Activated B cell treated with CpG ODN at 0.5 μM for 24 hours (primary cell): ENCODE measurements at regions of chr15 and their contacts with region 1.

Region 1: DNA sequence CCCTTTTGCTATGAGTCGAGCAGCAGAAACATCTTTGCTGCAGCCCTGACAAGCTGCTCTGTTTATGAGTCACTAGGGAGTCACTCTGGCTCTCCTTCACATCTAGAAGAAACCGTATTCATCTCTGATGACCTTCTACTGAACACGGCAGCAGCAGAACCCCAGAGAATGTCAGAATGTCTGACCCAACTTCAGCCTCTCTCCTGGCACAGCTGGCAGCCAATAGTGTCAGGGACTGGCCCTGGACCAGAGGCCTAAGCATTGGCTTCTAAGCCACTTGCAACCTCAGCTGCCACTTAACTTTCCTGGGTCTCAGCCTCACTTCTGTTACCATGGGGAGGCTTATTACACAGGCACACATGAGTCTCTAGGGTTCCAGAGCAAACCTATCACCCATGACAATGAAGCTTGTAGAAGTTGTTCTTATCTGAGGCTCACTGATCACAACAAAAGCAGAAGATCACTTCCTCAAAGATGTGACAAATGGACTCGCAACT is 184.1 kb upstream of the TLE3 start:
- DNase-seq: peak; percentile 53
- ATAC-seq: peak; percentile 88
- H3K4me3 Mint-ChIP-seq: peak overlapping the region; percentile 33
- H3K27ac Mint-ChIP-seq: peak overlapping the region; percentile 94
- H3K4me1 Mint-ChIP-seq: peaks cover 55% of the 10 kb centered on the region
- H3K27me3 Mint-ChIP-seq: no peaks in the 10 kb centered on the region
- CTCF ChIP-seq: no peak

Region 2: GRCh38 chr15:69903470-69904469 is 378.1 kb before region 1 on chr15:
- CTCF ChIA-PET with region 1: no interaction called
- POLR2A ChIA-PET with region 1: no interaction called
- intact Hi-C with region 1: no loop called
- DNase-seq: no peak
- ATAC-seq: no peak
- H3K4me3 Mint-ChIP-seq: no peak overlapping the region
- H3K27ac Mint-ChIP-seq: no peak overlapping the region
- H3K4me1 Mint-ChIP-seq: no peaks in the 10 kb centered on the region
- H3K27me3 Mint-ChIP-seq: peaks cover 6% of the 10 kb centered on the region
- CTCF ChIP-seq: no peak

Region 3: GRCh38 chr15:70271422-70272088 is 10.3 kb before region 1 on chr15:
- CTCF ChIA-PET with region 1: interaction called, 3 read pairs
- POLR2A ChIA-PET with region 1: interaction called, 30 read pairs
- intact Hi-C with region 1: loop called (anchors 1 kb)
- DNase-seq: no peak
- ATAC-seq: no peak
- H3K4me3 Mint-ChIP-seq: no peak overlapping the region
- H3K27ac Mint-ChIP-seq: no peak overlapping the region
- H3K4me1 Mint-ChIP-seq: peaks cover 57% of the 10 kb centered on the region
- H3K27me3 Mint-ChIP-seq: peaks cover 3% of the 10 kb centered on the region
- CTCF ChIP-seq: no peak

Region 4: GRCh38 chr15:70299931-70300869 is 18.3 kb after region 1 on chr15:
- CTCF ChIA-PET with region 1: no interaction called
- POLR2A ChIA-PET with region 1: interaction called, 5 read pairs
- intact Hi-C with region 1: loop called (anchors 2 kb)
- DNase-seq: peak; percentile 39
- ATAC-seq: peak; percentile 98
- H3K4me3 Mint-ChIP-seq: peak overlapping the region; percentile 42
- H3K27ac Mint-ChIP-seq: peak overlapping the region; percentile 33
- H3K4me1 Mint-ChIP-seq: peaks cover 11% of the 10 kb centered on the region
- H3K27me3 Mint-ChIP-seq: no peaks in the 10 kb centered on the region
- CTCF ChIP-seq: no peak

Region 5: GRCh38 chr15:70308011-70308734 is 26.3 kb after region 1 on chr15:
- CTCF ChIA-PET with region 1: no interaction called
- POLR2A ChIA-PET with region 1: no interaction called
- intact Hi-C with region 1: loop called (anchors 1 kb)
- DNase-seq: peak; percentile 54
- ATAC-seq: peak; percentile 91
- H3K4me3 Mint-ChIP-seq: peak overlapping the region; percentile 58
- H3K27ac Mint-ChIP-seq: peak overlapping the region; percentile 16
- H3K4me1 Mint-ChIP-seq: peaks cover 23% of the 10 kb centered on the region
- H3K27me3 Mint-ChIP-seq: no peaks in the 10 kb centered on the region
- CTCF ChIP-seq: no peak

Region 6: DNA sequence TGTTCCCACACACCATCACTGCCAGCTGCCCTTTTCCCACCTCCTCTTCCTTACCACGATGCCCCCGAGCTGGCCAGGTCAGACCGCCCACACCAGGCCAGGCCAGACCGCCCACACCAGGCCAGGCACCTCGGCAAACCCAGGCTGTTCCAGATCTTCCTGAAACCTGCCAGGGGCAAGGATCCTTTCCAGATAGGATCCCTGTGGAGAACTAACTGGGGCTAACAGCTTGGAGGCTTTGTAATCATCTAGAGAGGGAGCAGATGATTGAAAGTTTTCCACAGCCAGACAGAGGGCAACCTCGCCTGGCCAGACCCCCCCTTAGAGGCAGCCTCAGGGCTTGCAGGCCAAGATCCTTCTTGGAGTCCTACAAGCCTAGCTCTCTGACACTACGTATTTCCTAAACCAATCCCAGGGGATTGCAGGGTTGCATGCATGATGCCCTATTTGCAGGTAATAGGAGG is 103.2 kb after region 1 on chr15:
- CTCF ChIA-PET with region 1: no interaction called
- POLR2A ChIA-PET with region 1: no interaction called
- intact Hi-C with region 1: loop called (anchors 1 kb)
- DNase-seq: no peak
- ATAC-seq: no peak
- H3K4me3 Mint-ChIP-seq: no peak overlapping the region
- H3K27ac Mint-ChIP-seq: no peak overlapping the region
- H3K4me1 Mint-ChIP-seq: peaks cover 24% of the 10 kb centered on the region
- H3K27me3 Mint-ChIP-seq: no peaks in the 10 kb centered on the region
- CTCF ChIP-seq: no peak

Region 7: DNA sequence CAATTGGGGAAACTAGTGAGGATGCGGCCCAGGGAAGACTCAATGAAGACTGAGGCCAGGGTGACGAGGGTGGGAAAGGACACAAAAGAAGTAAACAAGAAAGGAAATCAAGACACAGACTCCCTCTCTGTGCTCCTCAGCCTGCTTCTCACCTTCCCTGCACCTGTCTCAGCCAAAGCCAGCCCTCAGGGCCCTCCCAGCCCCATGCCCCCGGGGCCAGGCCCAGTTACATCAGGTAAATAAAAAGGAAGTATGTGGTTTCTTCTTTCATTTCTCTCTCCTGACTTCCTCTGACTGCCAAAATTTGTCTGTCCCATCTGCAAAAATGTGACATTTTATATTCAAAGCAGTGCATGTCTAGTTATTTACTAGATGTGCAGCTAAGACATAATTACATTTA is 153.5 kb after region 1 on chr15:
- CTCF ChIA-PET with region 1: no interaction called
- POLR2A ChIA-PET with region 1: no interaction called
- intact Hi-C with region 1: loop called (anchors 5 kb)
- DNase-seq: peak; percentile 44
- ATAC-seq: peak; percentile 93
- H3K4me3 Mint-ChIP-seq: peak overlapping the region; percentile 55
- H3K27ac Mint-ChIP-seq: peak overlapping the region; percentile 67
- H3K4me1 Mint-ChIP-seq: peaks cover 28% of the 10 kb centered on the region
- H3K27me3 Mint-ChIP-seq: no peaks in the 10 kb centered on the region
- CTCF ChIP-seq: no peak

Region 8: GRCh38 chr15:70679919-70680231 is 398.0 kb after region 1 on chr15:
- CTCF ChIA-PET with region 1: no interaction called
- POLR2A ChIA-PET with region 1: no interaction called
- intact Hi-C with region 1: no loop called
- DNase-seq: no peak
- ATAC-seq: no peak
- H3K4me3 Mint-ChIP-seq: no peak overlapping the region
- H3K27ac Mint-ChIP-seq: no peak overlapping the region
- H3K4me1 Mint-ChIP-seq: no peaks in the 10 kb centered on the region
- H3K27me3 Mint-ChIP-seq: peaks cover 9% of the 10 kb centered on the region
- CTCF ChIP-seq: no peak